ENCODE measurements at regions of chr6 and their contacts with region 1.

Region 1: DNA sequence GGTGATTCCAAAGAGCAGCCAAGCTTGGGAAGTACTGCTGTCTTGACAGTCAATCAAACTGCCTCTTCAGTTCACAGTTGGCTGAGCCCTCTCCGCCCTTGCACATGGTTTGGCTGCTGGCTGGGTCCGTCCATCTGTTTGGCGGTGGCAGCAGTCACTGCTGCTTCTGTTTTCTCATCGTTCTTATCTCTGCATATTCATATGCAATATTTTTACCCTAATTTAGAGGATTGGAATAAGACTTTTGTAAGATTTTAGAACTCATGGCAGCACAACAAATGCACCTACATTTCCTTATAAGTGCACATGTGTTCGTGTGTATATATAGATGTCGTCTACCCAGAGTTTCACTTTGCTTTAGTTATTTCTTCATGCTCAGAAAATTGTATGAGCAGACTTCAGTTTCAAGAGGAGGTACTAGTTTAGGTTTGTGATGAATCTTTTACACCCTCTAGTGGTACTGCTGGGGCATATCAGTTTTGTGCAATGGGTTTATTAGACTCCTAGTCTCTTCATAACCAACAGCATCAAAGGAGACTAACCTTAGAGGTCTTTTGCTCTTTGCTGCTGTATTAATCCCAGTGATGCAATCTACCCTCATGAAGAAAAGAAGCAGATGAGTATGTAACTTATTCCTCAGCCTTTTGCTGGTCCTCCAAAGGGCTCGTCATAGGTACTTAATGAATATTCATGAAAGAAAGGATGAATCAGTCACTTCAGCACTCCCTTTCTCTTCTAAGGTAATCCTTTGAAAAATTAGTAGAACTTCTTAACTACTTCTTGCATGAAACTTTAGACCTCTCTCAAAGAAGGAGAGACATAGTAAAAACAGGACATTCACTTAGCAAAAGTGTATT is 44.3 kb downstream of the KHDC1L start:
- DNase-seq: no peak
- ATAC-seq: peak; percentile 81
- H3K4me3 ChIP-seq: peak overlapping the region in 1 of 2 donors; percentile 52
- H3K27ac ChIP-seq: no peak overlapping the region
- H3K4me1 ChIP-seq: no peaks in the 10 kb centered on the region
- H3K27me3 ChIP-seq: no peaks in the 10 kb centered on the region

Region 2: DNA sequence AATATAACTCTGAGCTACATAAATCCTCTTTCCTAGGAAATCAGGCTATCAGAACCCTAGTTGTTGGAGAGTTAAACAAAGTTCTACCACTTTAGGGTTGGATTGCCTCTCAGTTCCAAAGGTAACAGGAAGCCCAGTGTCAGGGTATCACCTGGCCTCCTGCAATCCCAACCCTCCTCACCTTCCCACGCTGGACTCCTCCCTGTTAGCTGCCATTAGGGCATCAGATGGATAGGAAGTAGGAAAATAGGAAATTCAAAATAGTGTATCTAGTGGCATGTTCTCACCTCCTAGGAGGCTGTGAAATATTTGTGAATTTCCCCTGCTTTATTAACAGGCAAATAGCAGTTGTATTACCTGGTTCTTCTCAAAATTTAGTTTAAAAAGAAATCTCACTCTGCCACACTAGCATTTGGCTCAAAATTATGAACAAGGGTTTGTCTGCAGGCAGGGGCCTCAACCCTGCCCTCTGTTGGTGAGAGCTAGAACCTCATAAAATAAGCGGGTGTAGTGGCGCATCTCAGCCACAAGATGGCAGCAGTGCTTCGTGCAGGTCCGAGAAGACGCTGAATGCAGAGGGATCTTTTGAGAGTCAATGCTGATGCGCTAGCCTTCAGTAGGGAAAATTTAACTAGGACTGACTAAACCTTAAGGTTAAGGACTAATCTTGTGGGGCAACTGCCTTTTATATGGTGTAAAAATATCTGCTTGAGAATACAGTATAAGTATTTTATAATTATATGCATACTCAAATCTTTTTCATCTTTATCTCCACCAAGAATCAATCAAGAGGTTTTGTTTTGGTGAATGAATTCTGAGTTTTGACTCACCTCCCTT is 768.9 kb before region 1 on chr6:
- intact Hi-C with region 1: loop called (anchors 5 kb)
- DNase-seq: peak; percentile 54 to 85
- ATAC-seq: peak; percentile 92
- H3K4me3 ChIP-seq: no peak overlapping the region
- H3K27ac ChIP-seq: no peak overlapping the region
- H3K4me1 ChIP-seq: no peaks in the 10 kb centered on the region
- H3K27me3 ChIP-seq: no peaks in the 10 kb centered on the region

Region 3: DNA sequence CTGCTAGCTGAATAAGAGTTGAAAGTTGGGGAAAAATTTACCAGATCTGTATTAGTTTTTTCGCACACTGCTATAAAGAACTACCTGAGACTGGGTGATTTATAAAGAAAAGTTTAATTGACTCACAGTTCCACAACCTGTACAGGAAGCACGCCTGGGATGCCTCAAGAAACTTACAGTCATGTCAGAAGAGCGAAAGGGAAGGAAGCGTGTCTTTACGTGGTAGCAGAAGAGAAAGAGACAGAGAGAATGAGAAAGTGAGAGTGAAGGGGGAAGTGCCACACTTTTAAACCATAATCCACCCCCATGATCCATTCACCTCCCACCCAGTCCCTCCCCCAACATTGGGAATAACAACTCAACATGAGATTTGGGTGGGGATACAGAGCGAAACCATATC is 35.3 kb before region 1 on chr6:
- intact Hi-C with region 1: no loop called
- DNase-seq: no peak
- ATAC-seq: no peak
- H3K4me3 ChIP-seq: no peak overlapping the region
- H3K27ac ChIP-seq: no peak overlapping the region
- H3K4me1 ChIP-seq: no peaks in the 10 kb centered on the region
- H3K27me3 ChIP-seq: no peaks in the 10 kb centered on the region

Region 4: DNA sequence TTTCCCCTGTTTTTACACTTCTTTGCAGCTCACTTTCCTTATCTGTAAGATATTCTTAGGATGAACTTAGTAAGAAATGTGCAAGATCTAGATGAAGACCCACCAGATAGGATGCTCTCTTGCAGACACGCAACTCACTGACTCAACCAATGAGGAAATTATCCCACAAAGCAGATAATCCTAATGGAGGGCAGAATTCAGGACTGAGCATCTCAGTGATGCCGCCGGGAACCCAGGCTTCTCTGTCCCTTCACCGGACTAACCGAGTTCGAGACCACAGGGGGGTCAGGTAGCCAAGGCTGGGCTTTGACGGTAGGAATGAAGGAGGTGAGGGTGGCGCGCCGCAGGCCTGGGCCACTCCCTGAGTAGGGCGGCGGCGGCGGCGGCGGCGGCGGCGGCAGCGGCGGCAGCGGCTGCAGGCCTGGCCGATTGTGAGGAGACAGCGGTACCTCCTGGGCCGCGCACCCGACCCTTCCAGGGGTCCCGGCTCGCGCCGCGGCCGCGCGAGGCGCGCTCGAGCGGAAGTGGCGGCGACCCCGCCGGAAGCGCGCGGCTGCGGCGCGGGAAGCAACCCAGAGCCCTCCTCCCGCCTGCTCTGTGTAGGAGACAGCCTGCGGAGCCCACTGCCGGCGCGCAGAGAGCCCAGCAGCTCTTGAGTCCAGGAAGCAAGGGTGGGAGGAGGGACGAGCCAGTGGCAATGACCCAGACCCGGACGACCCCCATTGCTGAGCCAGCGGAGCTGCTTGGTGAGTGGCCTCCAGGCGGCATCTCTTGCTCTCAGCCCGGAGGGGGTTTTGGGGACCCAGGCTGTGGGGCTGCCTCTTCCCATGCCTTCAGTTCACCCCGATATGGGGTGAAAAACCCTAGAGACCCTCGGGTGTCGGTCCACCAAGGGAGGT is 81.9 kb after region 1 on chr6 and contains the start of gene KHDC1:
- intact Hi-C with region 1: no loop called
- DNase-seq: peak; percentile 62 to 83
- ATAC-seq: peak; percentile 80
- H3K4me3 ChIP-seq: peak within 1 kb of the TSS; percentile 71 to 77
- H3K27ac ChIP-seq: peak within 1 kb of the TSS in 1 of 2 donors; percentile 22
- H3K4me1 ChIP-seq: no peaks in the 10 kb centered on the region
- H3K27me3 ChIP-seq: no peaks in the 10 kb centered on the region
- total RNA-seq, gene KHDC1: 1.8 to 2.8 TPM